CD8-positive, alpha-beta T cell (primary cell): ENCODE measurements at regions of chr14 and their contacts with region 1.

Region 1: DNA sequence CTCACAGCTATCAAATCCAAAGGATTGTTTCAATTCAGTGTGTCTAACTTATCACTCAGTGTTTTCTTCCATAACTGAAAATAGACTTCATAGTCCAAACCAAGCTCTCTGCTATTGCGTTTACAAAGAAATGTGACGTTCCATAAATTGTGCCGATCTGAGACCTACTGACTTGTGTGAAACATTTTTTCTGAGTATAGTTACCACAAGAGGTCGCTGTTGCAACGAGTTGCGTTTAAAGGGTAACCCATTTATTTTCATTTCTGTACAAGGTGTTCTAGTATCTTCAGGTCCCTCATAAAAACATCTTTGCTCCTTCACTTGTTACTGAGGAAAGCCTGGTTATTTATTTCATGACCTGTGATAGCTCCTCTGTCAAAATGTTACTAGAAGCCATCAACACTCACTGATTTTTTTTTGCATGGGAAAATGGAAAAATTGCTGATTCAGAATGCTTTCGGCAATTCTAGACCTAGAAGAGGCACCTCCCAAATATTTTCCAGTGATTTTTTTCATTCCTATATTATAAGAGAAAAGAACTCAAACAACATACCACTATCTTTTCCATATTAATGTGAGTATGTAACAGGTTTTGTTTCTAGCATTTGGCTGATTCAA is 60.9 kb upstream of the OR4E1 start:
- DNase-seq: peak in 5 of 9 experiments; percentile 11 to 83 (median 49)
- ATAC-seq: peak; percentile 37
- H3K4me3 ChIP-seq: no peak overlapping the region
- H3K4me3 Mint-ChIP-seq: peak overlapping the region; percentile 45
- H3K27ac ChIP-seq: no peak overlapping the region
- H3K27ac Mint-ChIP-seq: peak overlapping the region; percentile 37
- H3K4me1 ChIP-seq: no peaks in the 10 kb centered on the region
- H3K4me1 Mint-ChIP-seq: peaks cover 18% of the 10 kb centered on the region
- H3K27me3 ChIP-seq: no peaks in the 10 kb centered on the region
- H3K27me3 Mint-ChIP-seq: peaks cover 33% of the 10 kb centered on the region
- CTCF ChIP-seq: peak; percentile 75

Region 2: GRCh38 chr14:21723431-21724045 is 11.0 kb before region 1 on chr14:
- CTCF ChIA-PET with region 1: interaction called, 32 read pairs
- POLR2A ChIA-PET with region 1: interaction called, 3 read pairs
- intact Hi-C with region 1: loop called in 1 of 2 experiments (anchors 1 kb)
- DNase-seq: peak in 6 of 9 experiments; percentile 9 to 75 (median 50)
- ATAC-seq: peak; percentile 80
- H3K4me3 ChIP-seq: peak overlapping the region; percentile 24 to 42
- H3K4me3 Mint-ChIP-seq: peak overlapping the region; percentile 80
- H3K27ac ChIP-seq: peak overlapping the region in 1 of 2 experiments; percentile 8
- H3K27ac Mint-ChIP-seq: peak overlapping the region; percentile 76
- H3K4me1 ChIP-seq: no peaks in the 10 kb centered on the region
- H3K4me1 Mint-ChIP-seq: peaks cover 3% of the 10 kb centered on the region
- H3K27me3 ChIP-seq: peaks cover 0 to 2% of the 10 kb centered on the region in 2 experiments
- H3K27me3 Mint-ChIP-seq: peaks cover 37% of the 10 kb centered on the region
- CTCF ChIP-seq: peak; percentile 35

Region 3: GRCh38 chr14:21748869-21749303 is 14.3 kb after region 1 on chr14:
- CTCF ChIA-PET with region 1: interaction called, 20 read pairs
- POLR2A ChIA-PET with region 1: interaction called, 4 read pairs
- intact Hi-C with region 1: no loop called
- DNase-seq: peak in 8 of 9 experiments; percentile 16 to 76 (median 54)
- ATAC-seq: peak; percentile 81
- H3K4me3 ChIP-seq: peak overlapping the region in 1 of 2 experiments; percentile 16
- H3K4me3 Mint-ChIP-seq: peak overlapping the region; percentile 62
- H3K27ac ChIP-seq: peak overlapping the region in 1 of 2 experiments; percentile 48
- H3K27ac Mint-ChIP-seq: peak overlapping the region; percentile 82
- H3K4me1 ChIP-seq: no peaks in the 10 kb centered on the region
- H3K4me1 Mint-ChIP-seq: peaks cover 10% of the 10 kb centered on the region
- H3K27me3 ChIP-seq: no peaks in the 10 kb centered on the region
- H3K27me3 Mint-ChIP-seq: peaks cover 22% of the 10 kb centered on the region
- CTCF ChIP-seq: peak; percentile 75

Region 4: GRCh38 chr14:22549981-22550673 is 815.6 kb after region 1 on chr14:
- CTCF ChIA-PET with region 1: no interaction called
- POLR2A ChIA-PET with region 1: no interaction called
- intact Hi-C with region 1: loop called (anchors 5 kb)
- DNase-seq: peak in 7 of 9 experiments; percentile 53 to 86 (median 78)
- ATAC-seq: peak; percentile 63
- H3K4me3 ChIP-seq: peak overlapping the region; percentile 2 to 14
- H3K4me3 Mint-ChIP-seq: peak overlapping the region; percentile 79
- H3K27ac ChIP-seq: peak overlapping the region; percentile 55 to 97
- H3K27ac Mint-ChIP-seq: peak overlapping the region; percentile 93
- H3K4me1 ChIP-seq: peaks cover 96% of the 10 kb centered on the region
- H3K4me1 Mint-ChIP-seq: peaks cover 94% of the 10 kb centered on the region
- H3K27me3 ChIP-seq: no peaks in the 10 kb centered on the region
- H3K27me3 Mint-ChIP-seq: no peaks in the 10 kb centered on the region
- CTCF ChIP-seq: no peak